ENCODE measurements at regions of chr6 and their contacts with region 1.

Region 1: GRCh38 chr6:122730775-122731386 is 48.6 kb upstream of the FABP7 start:
- H3K4me3 Mint-ChIP-seq: no peak overlapping the region
- H3K27ac Mint-ChIP-seq: no peak overlapping the region
- H3K4me1 Mint-ChIP-seq: no peaks in the 10 kb centered on the region
- H3K27me3 Mint-ChIP-seq: peaks cover 15% of the 10 kb centered on the region

Region 2: GRCh38 chr6:122609856-122610689 is 120.8 kb before region 1 on chr6 and contains the start of gene PKIB:
- intact Hi-C with region 1: loop called (anchors 5 kb)
- H3K4me3 Mint-ChIP-seq: peak within 1 kb of the TSS; percentile 82
- H3K27ac Mint-ChIP-seq: peak within 1 kb of the TSS; percentile 63
- H3K4me1 Mint-ChIP-seq: peaks cover 21% of the 10 kb centered on the region
- H3K27me3 Mint-ChIP-seq: peaks cover 52% of the 10 kb centered on the region

Region 3: DNA sequence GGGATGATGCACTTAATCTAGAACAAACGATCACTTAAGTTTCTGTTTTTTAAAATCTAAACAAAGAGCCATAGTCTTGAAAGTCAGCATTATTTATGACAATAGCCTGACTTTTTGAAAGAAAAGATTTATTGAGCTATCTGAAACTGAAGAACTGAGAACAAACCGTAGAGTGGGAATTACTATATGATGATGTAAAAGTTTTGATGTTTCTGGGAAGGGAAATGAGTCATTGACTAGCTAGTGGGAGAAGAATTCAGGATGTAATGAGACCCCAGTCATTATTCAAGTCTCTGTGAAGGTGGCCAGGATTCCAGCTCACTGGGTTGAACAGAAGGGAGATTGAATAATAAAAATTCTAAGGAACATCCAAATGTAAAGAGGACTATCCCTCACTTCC is 34.8 kb before region 1 on chr6:
- intact Hi-C with region 1: no loop called
- H3K4me3 Mint-ChIP-seq: no peak overlapping the region
- H3K27ac Mint-ChIP-seq: no peak overlapping the region
- H3K4me1 Mint-ChIP-seq: peaks cover 10% of the 10 kb centered on the region
- H3K27me3 Mint-ChIP-seq: peaks cover 3% of the 10 kb centered on the region

Region 4: DNA sequence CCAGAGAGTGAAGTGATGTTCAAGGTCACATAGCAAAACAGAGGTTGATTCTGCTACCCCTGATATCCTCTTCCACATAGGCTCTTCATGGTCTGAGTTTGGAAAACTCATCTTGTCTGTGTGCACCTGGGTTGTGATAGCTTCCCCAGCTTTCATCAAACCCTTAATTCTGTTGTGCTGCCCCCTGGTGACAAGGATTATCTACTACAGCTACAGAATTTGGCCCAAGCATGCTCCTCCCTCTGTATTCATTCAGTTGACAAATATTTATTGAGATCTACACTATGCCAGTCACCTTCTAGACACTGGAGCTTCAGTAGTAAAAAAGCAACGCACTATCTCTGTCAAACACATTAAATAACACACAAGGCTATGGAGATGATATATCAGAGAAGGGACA is 108.6 kb after region 1 on chr6:
- intact Hi-C with region 1: loop called (anchors 1 kb)
- H3K4me3 Mint-ChIP-seq: no peak overlapping the region
- H3K27ac Mint-ChIP-seq: no peak overlapping the region
- H3K4me1 Mint-ChIP-seq: no peaks in the 10 kb centered on the region
- H3K27me3 Mint-ChIP-seq: peaks cover 9% of the 10 kb centered on the region

Region 5: DNA sequence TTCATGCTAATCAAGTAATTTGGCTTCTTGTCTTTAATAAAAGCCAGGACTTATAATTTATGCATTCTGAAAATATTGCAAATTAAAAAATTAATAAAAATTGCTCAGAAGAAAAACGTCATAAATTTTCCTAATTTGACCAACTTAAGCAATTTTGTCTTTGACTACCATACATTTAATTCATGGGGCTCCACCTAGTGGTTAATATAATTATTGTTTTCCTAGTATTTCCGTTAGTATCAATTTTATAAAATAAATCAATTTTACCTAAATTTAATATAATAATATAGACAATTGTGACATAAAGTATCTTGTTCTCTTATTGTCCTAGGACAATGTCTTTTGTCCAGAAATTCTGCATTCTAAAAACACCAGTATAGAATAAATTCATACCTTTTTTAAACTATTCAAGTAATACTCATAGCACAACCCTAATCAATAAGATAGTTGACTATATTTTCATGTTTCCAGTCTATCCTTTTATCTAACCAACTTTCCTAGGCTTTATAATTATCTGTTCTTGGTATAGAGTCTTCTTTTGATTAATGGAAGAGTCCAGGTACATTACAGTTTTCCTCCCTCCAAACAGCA is 585.9 kb after region 1 on chr6:
- intact Hi-C with region 1: loop called (anchors 2 kb)
- H3K4me3 Mint-ChIP-seq: no peak overlapping the region
- H3K27ac Mint-ChIP-seq: no peak overlapping the region
- H3K4me1 Mint-ChIP-seq: no peaks in the 10 kb centered on the region
- H3K27me3 Mint-ChIP-seq: no peaks in the 10 kb centered on the region

Measured in dendritic cell treated with granulocyte-macrophage colony-stimulating factor and Interleukin-4, amounts not matched to agents 40 ng/mL and 50 ng/mL, for 4 days (primary cell).